Activated CD4-positive, alpha-beta memory T cell treated with anti-CD3 and anti-CD28 coated beads for 36 hours (primary cell): ENCODE measurements at regions of chr16 and their contacts with region 1.

Region 1: DNA sequence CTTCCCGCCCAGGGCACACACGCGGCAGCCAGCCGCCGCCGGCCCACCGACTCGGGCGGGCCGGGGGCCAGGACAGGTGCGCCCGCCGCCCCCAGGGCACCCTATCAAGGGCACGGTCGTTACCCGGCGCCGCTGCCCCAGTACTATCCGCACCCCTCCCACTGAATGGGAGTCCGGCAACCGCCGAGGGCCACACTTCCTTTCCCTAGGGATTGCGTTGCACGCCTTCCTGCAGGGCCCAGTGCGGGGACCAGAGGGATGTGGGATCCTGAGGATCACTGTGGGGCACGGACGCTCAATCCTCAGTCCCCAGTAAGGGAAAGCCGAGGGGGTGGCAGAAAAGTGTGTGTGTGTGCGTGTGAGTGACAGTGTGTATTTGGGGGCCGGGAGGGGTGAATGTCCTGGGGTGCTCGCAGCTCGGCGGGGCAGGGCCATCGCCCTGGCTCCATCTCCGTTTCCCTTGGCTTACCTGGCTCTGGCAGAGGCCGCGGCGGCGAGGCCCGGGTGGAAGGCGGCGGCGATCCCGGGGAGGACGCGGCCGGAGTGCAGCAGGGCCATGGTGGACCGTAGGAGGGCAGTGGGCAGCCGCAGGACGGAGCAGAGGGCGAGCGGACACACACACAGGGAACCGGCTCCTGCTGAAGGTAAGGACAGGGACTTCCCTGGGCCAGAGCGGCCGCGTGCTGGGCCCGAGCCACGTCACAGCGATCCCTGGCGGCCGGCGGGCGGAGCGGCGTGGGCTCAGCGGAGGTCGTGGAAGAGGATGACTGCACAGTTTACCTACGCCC is at the start of gene GOT2:
- DNase-seq: peak; percentile 88
- H3K4me3 Mint-ChIP-seq: peak within 1 kb of the TSS; percentile 98
- H3K27ac Mint-ChIP-seq: peak within 1 kb of the TSS; percentile 88
- H3K4me1 Mint-ChIP-seq: peaks cover 38% of the 10 kb centered on the region
- H3K27me3 Mint-ChIP-seq: no peaks in the 10 kb centered on the region
- total RNA-seq, gene GOT2: 125 to 127 TPM

Region 2: GRCh38 chr16:58392215-58393137 is 341.4 kb before region 1 on chr16 and contains the start of gene GINS3:
- CTCF ChIA-PET with region 1: no interaction called
- POLR2A ChIA-PET with region 1: no interaction called
- intact Hi-C with region 1: loop called (anchors 5 kb)
- DNase-seq: peak; percentile 92
- H3K4me3 Mint-ChIP-seq: peak within 1 kb of the TSS; percentile 95
- H3K27ac Mint-ChIP-seq: peak within 1 kb of the TSS; percentile 96
- H3K4me1 Mint-ChIP-seq: peaks cover 11% of the 10 kb centered on the region
- H3K27me3 Mint-ChIP-seq: no peaks in the 10 kb centered on the region
- total RNA-seq, gene GINS3: 13.8 to 14.0 TPM

Region 3: DNA sequence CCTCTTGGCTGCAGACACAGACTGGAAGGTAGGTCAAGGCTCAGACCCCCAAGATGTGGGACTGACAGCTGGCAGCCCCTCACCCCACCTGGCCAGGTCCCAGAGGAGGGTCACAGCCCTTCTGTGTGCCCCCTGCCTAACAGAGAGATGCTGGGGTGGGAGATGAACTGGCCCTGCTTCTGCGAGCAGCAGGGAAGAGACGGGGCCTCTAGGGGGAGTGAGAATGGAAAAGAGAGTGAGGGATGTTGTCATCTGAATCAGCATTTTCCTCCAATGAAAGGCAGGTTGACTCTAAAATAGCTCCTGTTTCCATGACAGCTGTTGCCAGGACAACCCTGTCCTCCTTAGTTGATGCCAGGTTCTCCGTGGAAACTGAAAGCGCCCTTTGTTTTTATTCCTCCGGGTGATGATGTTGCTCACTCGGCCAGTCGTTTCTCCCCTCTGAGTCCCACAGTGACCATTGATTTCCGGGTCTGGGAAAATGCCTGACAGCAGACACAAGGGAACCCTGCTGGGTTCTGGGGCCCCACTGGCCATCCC is 238.8 kb before region 1 on chr16:
- CTCF ChIA-PET with region 1: no interaction called
- POLR2A ChIA-PET with region 1: no interaction called
- intact Hi-C with region 1: loop called (anchors 1 kb)
- DNase-seq: peak; percentile 85
- H3K4me3 Mint-ChIP-seq: no peak overlapping the region
- H3K27ac Mint-ChIP-seq: no peak overlapping the region
- H3K4me1 Mint-ChIP-seq: peaks cover 15% of the 10 kb centered on the region
- H3K27me3 Mint-ChIP-seq: peaks cover 1% of the 10 kb centered on the region

Region 4: GRCh38 chr16:58515125-58515870 is 218.6 kb before region 1 on chr16 and contains the start of gene SETD6:
- CTCF ChIA-PET with region 1: interaction called, 3 read pairs
- POLR2A ChIA-PET with region 1: interaction called, 3 read pairs
- intact Hi-C with region 1: loop called (anchors 2 kb)
- DNase-seq: peak; percentile 85
- H3K4me3 Mint-ChIP-seq: peak within 1 kb of the TSS; percentile 89
- H3K27ac Mint-ChIP-seq: peak within 1 kb of the TSS; percentile 76
- H3K4me1 Mint-ChIP-seq: peaks cover 45% of the 10 kb centered on the region
- H3K27me3 Mint-ChIP-seq: no peaks in the 10 kb centered on the region
- total RNA-seq, gene SETD6: 12.9 to 14.5 TPM

Region 5: DNA sequence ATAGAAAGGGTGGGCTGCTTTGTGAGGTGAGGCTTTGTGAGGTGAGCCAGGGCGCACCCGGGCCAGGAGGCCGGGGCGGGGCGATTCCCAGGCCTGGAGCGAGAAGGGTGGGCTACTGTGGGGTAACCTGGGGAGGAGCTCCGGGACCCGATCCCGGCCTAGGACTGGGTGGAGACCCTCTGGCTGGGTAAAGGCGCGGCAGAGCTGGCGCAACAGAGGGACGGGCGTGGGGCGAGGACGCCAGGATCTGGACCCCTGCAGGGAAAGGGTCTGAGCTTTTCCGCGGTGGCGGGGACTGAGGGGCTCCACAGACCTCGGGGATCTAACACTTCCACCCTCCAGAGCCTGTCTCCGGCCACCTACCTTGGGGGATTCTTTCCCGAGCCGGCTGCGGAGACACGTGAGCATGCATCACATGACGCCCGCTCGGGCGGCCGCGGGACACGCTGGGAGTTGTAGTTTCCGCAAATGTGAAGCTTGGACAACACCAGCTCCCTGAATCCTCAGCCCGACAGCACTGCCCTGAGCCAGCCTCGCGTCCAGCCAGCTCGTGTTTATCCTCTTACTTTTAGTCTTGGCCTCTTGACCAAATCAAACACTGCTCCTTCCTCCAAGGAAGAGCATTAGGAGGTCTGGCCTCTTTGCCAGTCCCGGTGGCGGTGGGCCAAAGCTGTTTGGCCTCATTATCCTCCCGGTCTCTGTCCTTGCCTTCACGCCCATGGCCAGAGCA is 49.3 kb before region 1 on chr16 and contains the start of gene SLC38A7:
- CTCF ChIA-PET with region 1: interaction called, 4 read pairs
- POLR2A ChIA-PET with region 1: interaction called, 5 read pairs
- intact Hi-C with region 1: loop called (anchors 1 kb)
- DNase-seq: peak; percentile 83
- H3K4me3 Mint-ChIP-seq: peak within 1 kb of the TSS; percentile 91
- H3K27ac Mint-ChIP-seq: no peak within 1 kb of the TSS
- H3K4me1 Mint-ChIP-seq: peaks cover 15% of the 10 kb centered on the region
- H3K27me3 Mint-ChIP-seq: no peaks in the 10 kb centered on the region
- total RNA-seq, gene SLC38A7: 5.0 to 5.4 TPM